ENCODE measurements at regions of chr3 and their contacts with region 1.

Region 1: GRCh38 chr3:98329392-98330124 is 24.1 kb upstream of the OR5K4 start:
- DNase-seq: peak in 8 of 10 donors; percentile 3 to 68 (median 55)
- H3K4me3 ChIP-seq: peak overlapping the region in 1 of 59 donors; percentile 19
- H3K27ac ChIP-seq: no peak overlapping the region
- H3K27me3 ChIP-seq: peaks cover 0 to 13% (median 0%) of the 10 kb centered on the region in 45 donors
- CTCF ChIP-seq: peak; percentile 53 to 92 (median 75)

Region 2: GRCh38 chr3:98039322-98040024 is 290.1 kb before region 1 on chr3:
- intact Hi-C with region 1: loop called (anchors 2 kb)
- DNase-seq: peak in 9 of 10 donors; percentile 16 to 76 (median 49)
- H3K4me3 ChIP-seq: peak overlapping the region; percentile 17 to 68 (median 52)
- H3K27ac ChIP-seq: peak overlapping the region in 27 of 59 donors; percentile 20 to 81 (median 59)
- H3K27me3 ChIP-seq: peaks cover 0 to 13% (median 0%) of the 10 kb centered on the region in 45 donors
- CTCF ChIP-seq: peak in 54 of 56 donors; percentile 84 to 100 (median 96)

Region 3: DNA sequence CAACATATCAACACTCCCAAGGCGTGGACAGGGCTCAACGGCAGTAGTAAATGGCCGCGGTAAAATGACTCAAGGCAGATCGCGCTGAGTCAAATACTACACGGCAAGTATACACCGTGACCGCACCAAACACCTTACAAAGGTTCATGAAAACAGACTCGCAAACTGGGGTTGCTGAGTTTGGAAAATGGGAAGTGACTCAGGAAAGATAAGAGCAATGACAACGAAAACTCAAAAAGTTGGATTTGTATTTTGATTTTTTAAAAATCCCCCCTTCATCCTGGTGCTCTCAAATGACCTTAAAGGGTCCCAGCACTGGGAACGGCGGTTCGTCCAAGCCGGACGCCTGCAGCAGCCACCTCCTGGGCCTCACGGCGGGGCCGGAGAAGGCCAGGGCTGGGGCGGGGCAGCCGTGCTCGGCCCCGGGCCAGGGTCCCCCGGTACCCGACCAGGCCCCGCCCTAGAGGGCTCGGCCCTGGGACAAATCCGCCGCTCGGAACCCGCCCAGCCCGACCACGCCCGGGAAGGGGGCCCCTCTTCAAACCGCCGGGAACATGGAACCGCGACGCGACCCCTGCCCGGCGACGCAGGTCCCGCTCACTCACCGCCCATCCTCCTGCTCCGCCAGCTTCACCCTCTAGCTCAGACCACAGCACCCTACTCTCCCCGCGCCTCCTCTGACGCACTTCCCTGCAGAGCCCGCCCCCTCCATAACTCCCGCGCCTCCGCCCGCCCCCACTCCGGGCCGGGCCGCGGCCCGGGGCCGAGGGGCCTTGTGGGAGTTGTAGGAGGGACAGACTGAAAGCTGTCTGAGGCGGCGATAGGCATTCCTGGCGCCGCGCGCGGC is 192.9 kb after region 1 on chr3 and contains the start of gene CLDND1:
- intact Hi-C with region 1: loop called in 1 of 2 experiments (anchors 10 kb)
- DNase-seq: peak; percentile 98 to 99 (median 99)
- H3K4me3 ChIP-seq: peak within 1 kb of the TSS; percentile 59 to 98 (median 85)
- H3K27ac ChIP-seq: peak within 1 kb of the TSS; percentile 89 to 100 (median 97)
- H3K27me3 ChIP-seq: no peaks in the 10 kb centered on the region
- CTCF ChIP-seq: peak in 23 of 56 donors; percentile 2 to 50 (median 29)
- total RNA-seq, gene CLDND1: 175 to 2,533 (median 594) TPM

Region 4: GRCh38 chr3:98588065-98588464 is 258.5 kb after region 1 on chr3:
- intact Hi-C with region 1: loop called (anchors 5 to 10 kb)
- DNase-seq: no peak
- H3K4me3 ChIP-seq: peak overlapping the region in 22 of 59 donors; percentile 0 to 93 (median 22)
- H3K27ac ChIP-seq: peak overlapping the region in 55 of 59 donors; percentile 1 to 98 (median 64)
- H3K27me3 ChIP-seq: no peaks in the 10 kb centered on the region
- CTCF ChIP-seq: peak in 52 of 56 donors; percentile 8 to 60 (median 36)

Region 5: DNA sequence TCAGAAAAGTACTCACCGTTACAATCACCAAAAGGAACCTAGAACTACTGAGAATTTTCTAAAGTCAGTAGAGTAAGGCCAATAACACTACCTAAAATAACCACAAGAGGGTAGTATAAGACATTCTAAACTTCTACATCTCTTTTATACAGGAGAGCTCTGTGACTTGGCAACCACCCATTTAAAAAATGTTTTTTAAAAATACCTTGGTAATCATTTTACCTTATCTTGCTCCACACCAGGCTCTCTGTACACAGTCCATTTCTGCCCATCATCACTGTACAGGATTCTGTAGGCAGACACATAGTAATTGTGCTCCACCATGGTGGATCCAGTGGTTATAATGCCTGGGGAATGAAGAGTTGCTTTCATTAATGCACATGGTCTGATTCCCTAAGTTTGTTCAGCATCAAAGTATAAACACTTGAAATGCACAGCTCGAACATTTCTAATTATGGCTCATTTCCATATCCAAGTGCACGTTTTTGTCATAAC is 488.0 kb after region 1 on chr3:
- intact Hi-C with region 1: loop called in 1 of 2 experiments (anchors 10 kb)
- DNase-seq: no peak
- H3K4me3 ChIP-seq: no peak overlapping the region
- H3K27ac ChIP-seq: peak overlapping the region in 2 of 59 donors; percentile 44 to 70
- H3K27me3 ChIP-seq: no peaks in the 10 kb centered on the region
- CTCF ChIP-seq: peak; percentile 78 to 99 (median 91)

Measured in dorsolateral prefrontal cortex (tissue), 120 donors.